ENCODE measurements at regions of chr12 and their contacts with region 1.

Region 1: GRCh38 chr12:50222275-50222795 is 55.2 kb upstream of the CERS5 start:
- DNase-seq: peak; percentile 11
- H3K4me3 Mint-ChIP-seq: no peak overlapping the region
- H3K27ac Mint-ChIP-seq: no peak overlapping the region
- H3K4me1 Mint-ChIP-seq: peaks cover 11% of the 10 kb centered on the region
- H3K27me3 Mint-ChIP-seq: no peaks in the 10 kb centered on the region

Region 2: DNA sequence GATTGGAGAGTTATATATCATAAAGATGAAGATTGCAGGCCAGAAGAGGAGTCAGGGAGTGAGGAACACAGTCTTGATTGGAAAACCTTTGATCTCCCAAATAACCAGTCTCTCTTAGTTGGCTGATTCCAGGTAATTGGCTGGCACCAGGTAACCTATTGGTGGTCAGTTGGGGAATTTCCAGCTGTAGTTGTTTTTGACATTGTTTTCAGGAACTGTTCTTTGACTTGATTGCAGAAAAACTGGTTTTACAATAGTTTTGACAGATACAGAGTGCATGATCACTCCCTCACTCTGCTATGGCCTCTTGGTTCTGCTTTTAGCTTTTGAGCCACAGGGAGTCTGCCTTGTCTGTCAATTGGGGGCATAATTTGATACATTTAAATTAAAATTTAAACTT is 1943.2 kb before region 1 on chr12:
- intact Hi-C with region 1: no loop called
- DNase-seq: no peak
- H3K4me3 Mint-ChIP-seq: no peak overlapping the region
- H3K27ac Mint-ChIP-seq: no peak overlapping the region
- H3K4me1 Mint-ChIP-seq: no peaks in the 10 kb centered on the region
- H3K27me3 Mint-ChIP-seq: peaks cover 7% of the 10 kb centered on the region

Region 3: DNA sequence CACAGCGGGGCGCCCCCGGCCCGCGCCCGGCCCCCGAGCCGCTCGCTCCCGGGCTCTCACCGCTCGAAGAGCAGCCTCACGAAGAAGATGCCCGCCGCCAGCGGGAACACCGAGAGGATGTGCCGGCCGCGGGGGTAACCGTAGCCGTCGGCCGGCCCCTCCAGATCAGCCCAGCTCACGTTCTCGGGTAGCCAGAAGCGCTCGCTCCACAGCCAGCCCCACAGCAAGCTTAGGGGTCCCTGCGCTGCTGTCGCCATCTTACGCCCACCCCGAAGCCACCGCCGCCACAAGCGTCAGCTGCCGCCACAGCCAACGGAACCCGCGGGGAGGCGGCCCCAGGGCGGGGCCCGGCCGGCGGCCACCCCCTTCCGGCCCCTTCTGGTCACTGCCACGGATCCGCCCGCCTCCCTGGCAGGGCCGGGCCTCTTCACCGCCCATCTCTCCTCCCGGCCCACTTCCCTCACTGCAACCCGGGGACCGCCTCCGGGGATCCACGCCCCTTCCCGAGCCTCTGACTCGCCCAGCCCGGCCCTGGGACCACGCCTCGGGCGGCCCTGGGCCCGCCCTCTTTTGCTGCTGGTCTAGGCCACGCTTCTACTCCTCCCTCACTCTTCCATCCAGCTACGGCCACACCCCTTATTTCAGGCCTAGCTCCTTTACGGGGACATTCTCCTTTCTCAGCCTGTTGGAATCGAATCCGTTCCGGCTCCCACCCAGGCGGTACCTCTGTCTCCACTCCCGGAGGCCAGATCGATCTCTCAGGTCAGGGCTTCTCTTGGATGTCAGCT is 55.1 kb before region 1 on chr12 and contains the start of gene CERS5:
- intact Hi-C with region 1: loop called (anchors 1 kb)
- DNase-seq: peak; percentile 98
- H3K4me3 Mint-ChIP-seq: peak within 1 kb of the TSS; percentile 99
- H3K27ac Mint-ChIP-seq: peak within 1 kb of the TSS; percentile 95
- H3K4me1 Mint-ChIP-seq: peaks cover 38% of the 10 kb centered on the region
- H3K27me3 Mint-ChIP-seq: no peaks in the 10 kb centered on the region
- total RNA-seq, gene CERS5: 64.2 and 67.9 TPM in 2 replicates

Region 4: GRCh38 chr12:50211392-50212070 is 10.8 kb before region 1 on chr12:
- intact Hi-C with region 1: loop called (anchors 1 kb)
- DNase-seq: no peak
- H3K4me3 Mint-ChIP-seq: peak overlapping the region; percentile 43
- H3K27ac Mint-ChIP-seq: peak overlapping the region; percentile 88
- H3K4me1 Mint-ChIP-seq: peaks cover 38% of the 10 kb centered on the region
- H3K27me3 Mint-ChIP-seq: no peaks in the 10 kb centered on the region

Region 5: DNA sequence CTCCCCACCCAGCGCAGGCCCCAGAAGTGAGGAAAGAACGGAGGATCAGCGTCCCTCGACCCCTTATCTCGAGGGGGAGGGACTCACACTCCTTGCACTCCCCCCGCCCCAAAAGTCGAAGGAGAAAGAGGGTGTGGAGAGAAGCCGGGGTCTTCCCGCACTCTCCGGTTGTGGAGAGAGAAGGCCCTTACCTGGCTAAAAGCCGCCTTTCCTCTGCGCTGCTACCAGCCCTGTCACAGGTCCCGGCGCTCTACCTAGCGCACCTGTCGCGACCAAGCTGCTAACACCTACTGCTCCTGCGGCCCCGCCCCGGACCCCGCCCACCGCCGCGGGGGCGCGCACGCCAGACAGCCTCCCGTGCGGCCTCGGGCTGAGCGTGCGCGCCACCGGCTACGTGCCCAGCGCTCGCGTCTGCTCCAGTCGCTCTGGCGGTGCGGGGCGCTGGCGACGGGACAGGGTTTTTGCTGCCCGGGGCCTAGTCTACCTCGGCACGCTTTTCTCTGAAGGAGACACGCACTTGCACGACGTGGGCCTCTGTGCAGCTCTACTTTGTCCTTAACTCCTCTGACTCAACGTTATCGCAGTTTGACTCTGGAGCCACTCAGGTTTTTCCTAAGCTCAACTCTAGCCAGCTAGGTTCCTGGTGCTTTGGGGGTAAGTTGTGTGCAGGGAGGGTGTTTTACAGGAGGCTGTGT is 61.0 kb after region 1 on chr12 and contains the start of gene LIMA1:
- intact Hi-C with region 1: loop called (anchors 1 kb)
- DNase-seq: peak; percentile 85
- H3K4me3 Mint-ChIP-seq: peak within 1 kb of the TSS; percentile 89
- H3K27ac Mint-ChIP-seq: peak within 1 kb of the TSS; percentile 74
- H3K4me1 Mint-ChIP-seq: peaks cover 17% of the 10 kb centered on the region
- H3K27me3 Mint-ChIP-seq: peaks cover 20% of the 10 kb centered on the region
- total RNA-seq, gene LIMA1: 64.0 and 68.4 TPM in 2 replicates